ENCODE measurements at regions of chr10 and their contacts with region 1.

Region 1: GRCh38 chr10:13787015-13787421 is 200.3 kb downstream of the PRPF18 start:
- DNase-seq: peak; percentile 31 to 53 (median 41)
- ATAC-seq: peak; percentile 75
- H3K4me3 ChIP-seq: no peak overlapping the region
- H3K4me1 ChIP-seq: peaks cover 10% of the 10 kb centered on the region
- CTCF ChIP-seq: no peak

Region 2: GRCh38 chr10:13431122-13431521 is 355.9 kb before region 1 on chr10:
- intact Hi-C with region 1: no loop called
- DNase-seq: no peak
- ATAC-seq: no peak
- H3K4me3 ChIP-seq: no peak overlapping the region
- H3K4me1 ChIP-seq: no peaks in the 10 kb centered on the region
- CTCF ChIP-seq: no peak

Region 3: GRCh38 chr10:14093730-14094484 is 306.9 kb after region 1 on chr10:
- intact Hi-C with region 1: loop called in 1 of 2 experiments (anchors 10 kb)
- DNase-seq: no peak
- ATAC-seq: no peak
- H3K4me3 ChIP-seq: no peak overlapping the region
- H3K4me1 ChIP-seq: no peaks in the 10 kb centered on the region
- CTCF ChIP-seq: no peak